Heart right ventricle (tissue), 16 donors: ENCODE measurements at regions of chr7 and their contacts with region 1.

Region 1: GRCh38 chr7:130668257-130669084 is at the start of gene COPG2:
- DNase-seq: peak; percentile 86 to 89
- ATAC-seq: peak; percentile 98 to 100 (median 99)
- H3K4me3 ChIP-seq: peak within 1 kb of the TSS; percentile 63 to 95 (median 76)
- H3K27ac ChIP-seq: peak within 1 kb of the TSS; percentile 75 to 94 (median 88)
- H3K4me1 ChIP-seq: peaks cover 0 to 37% (median 12%) of the 10 kb centered on the region in 9 donors
- H3K27me3 ChIP-seq: no peaks in the 10 kb centered on the region
- CTCF ChIP-seq: peak in 2 of 9 donors; percentile 9 to 24
- total RNA-seq, gene COPG2: 19.9 to 27.2 (median 23.3) TPM

Region 2: GRCh38 chr7:130205084-130205947 is 463.2 kb before region 1 on chr7 and contains the start of gene TMEM209:
- intact Hi-C with region 1: loop called in 1 of 10 experiments (anchors 5 kb)
- DNase-seq: peak; percentile 95 to 96
- ATAC-seq: peak; percentile 98 to 100 (median 99)
- H3K4me3 ChIP-seq: peak within 1 kb of the TSS; percentile 58 to 75 (median 74)
- H3K27ac ChIP-seq: peak within 1 kb of the TSS; percentile 18 to 94 (median 87)
- H3K4me1 ChIP-seq: peaks cover 4 to 12% (median 6%) of the 10 kb centered on the region in 9 donors
- H3K27me3 ChIP-seq: no peaks in the 10 kb centered on the region
- CTCF ChIP-seq: no peak
- total RNA-seq, gene TMEM209: 7.7 to 14.7 (median 12.6) TPM

Region 3: GRCh38 chr7:130566168-130566897 is 102.1 kb before region 1 on chr7:
- intact Hi-C with region 1: loop called in 2 of 10 experiments (anchors 5 kb)
- DNase-seq: peak; percentile 78 to 92
- ATAC-seq: peak; percentile 97 to 100 (median 100)
- H3K4me3 ChIP-seq: no peak overlapping the region
- H3K27ac ChIP-seq: peak overlapping the region; percentile 49 to 84 (median 80)
- H3K4me1 ChIP-seq: peaks cover 0 to 29% (median 11%) of the 10 kb centered on the region in 9 donors
- H3K27me3 ChIP-seq: no peaks in the 10 kb centered on the region
- CTCF ChIP-seq: no peak